MCF 10A (cell line): ENCODE measurements at regions of chr20 and their contacts with region 1.

Region 1: DNA sequence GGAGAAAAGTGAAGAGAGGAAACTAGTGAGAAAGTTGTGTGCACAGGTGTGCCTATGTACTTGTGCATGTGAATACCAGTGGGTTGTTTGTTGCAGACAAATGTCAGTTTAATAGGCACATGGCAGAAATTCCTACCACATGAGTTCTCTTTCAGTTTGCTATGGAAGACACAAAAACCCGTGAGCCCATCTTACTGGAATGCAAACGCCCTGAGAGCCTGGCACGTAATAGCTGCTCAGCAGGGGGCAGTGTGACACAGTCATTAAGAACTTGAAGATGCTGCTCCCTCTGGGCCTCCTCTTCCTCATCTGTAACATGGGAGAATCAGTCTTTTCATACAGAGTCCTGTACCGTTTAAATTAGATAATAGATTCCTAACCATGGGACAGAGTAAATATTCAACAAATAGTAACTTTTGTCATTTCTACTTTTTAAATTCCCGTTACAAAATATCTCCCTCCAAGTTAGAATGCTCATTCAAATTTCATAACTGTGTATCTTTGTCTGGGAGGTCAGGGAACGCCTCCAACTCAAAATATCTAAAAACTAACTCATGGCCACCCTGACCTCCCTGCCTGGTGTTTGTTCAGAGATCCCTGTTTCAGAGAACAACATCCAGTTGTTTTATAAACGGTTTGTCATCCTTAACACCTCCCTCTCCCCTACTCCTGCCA is 802.9 kb downstream of the MAFB start:
- DNase-seq: peak; percentile 80
- H3K4me3 Mint-ChIP-seq: no peak overlapping the region
- H3K27ac Mint-ChIP-seq: no peak overlapping the region
- H3K4me1 Mint-ChIP-seq: peaks cover 9% of the 10 kb centered on the region
- H3K27me3 Mint-ChIP-seq: no peaks in the 10 kb centered on the region
- CTCF ChIP-seq: peak; percentile 58

Region 2: DNA sequence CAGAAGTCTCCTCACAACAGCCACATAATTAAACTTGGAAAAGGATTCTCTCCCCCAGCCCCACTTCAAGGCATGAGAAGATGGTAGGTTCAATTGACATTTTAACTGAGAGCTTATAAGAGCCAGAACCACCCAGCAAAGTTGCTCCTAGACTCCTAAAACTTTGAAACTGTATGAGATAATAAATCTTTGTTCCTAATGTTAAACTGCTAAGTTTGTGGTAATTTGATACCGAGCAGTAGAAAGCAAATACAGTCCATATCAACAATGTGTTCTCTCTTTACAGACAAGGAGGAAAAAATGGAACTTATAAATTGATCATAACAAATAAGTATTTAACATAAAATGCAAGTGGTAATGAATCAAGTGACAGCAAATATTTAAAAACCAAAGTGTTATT is 28.9 kb before region 1 on chr20:
- CTCF ChIA-PET with region 1: no interaction called
- POLR2A ChIA-PET with region 1: no interaction called
- intact Hi-C with region 1: no loop called
- DNase-seq: no peak
- H3K4me3 Mint-ChIP-seq: no peak overlapping the region
- H3K27ac Mint-ChIP-seq: no peak overlapping the region
- H3K4me1 Mint-ChIP-seq: peaks cover 39% of the 10 kb centered on the region
- H3K27me3 Mint-ChIP-seq: no peaks in the 10 kb centered on the region
- CTCF ChIP-seq: no peak

Region 3: GRCh38 chr20:40090236-40090635 is 204.1 kb after region 1 on chr20:
- CTCF ChIA-PET with region 1: no interaction called
- POLR2A ChIA-PET with region 1: no interaction called
- intact Hi-C with region 1: loop called (anchors 2 kb)
- DNase-seq: peak; percentile 42
- H3K4me3 Mint-ChIP-seq: no peak overlapping the region
- H3K27ac Mint-ChIP-seq: no peak overlapping the region
- H3K4me1 Mint-ChIP-seq: no peaks in the 10 kb centered on the region
- H3K27me3 Mint-ChIP-seq: no peaks in the 10 kb centered on the region
- CTCF ChIP-seq: no peak

Region 4: DNA sequence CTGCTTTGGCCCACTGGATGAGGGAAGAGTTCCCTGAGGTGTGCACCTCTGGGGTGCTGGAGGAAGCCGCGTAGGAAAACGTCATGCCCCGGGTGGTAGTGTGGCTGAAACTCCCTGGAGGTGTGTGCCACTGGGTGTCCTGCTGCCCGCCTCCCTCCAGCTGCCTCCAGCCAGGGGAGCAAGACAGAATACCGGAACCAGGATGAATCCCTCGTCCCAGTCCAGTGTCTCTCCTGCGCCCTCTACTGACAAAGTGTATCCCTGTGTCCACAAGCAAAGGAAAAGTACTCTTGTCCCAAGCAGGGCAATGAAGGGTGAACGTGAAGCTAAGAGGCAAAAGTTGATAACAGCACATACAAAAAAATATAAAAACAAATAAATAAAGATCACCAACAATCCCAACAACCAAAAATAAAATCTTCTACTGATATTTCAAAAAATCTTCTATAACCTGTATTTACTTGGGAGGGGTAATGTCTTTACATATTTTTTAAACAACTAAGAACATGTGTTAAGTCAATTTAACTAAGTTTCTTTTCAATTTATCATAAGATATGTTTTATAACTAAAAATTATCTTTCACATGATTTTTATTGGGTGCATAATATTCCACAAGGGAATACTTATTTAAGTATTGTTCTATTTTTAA is 365.3 kb after region 1 on chr20:
- CTCF ChIA-PET with region 1: interaction called, 3 read pairs
- POLR2A ChIA-PET with region 1: no interaction called
- intact Hi-C with region 1: loop called (anchors 1 kb)
- DNase-seq: peak; percentile 76
- H3K4me3 Mint-ChIP-seq: no peak overlapping the region
- H3K27ac Mint-ChIP-seq: no peak overlapping the region
- H3K4me1 Mint-ChIP-seq: peaks cover 8% of the 10 kb centered on the region
- H3K27me3 Mint-ChIP-seq: no peaks in the 10 kb centered on the region
- CTCF ChIP-seq: peak; percentile 52

Region 5: GRCh38 chr20:40945754-40946450 is 1059.8 kb after region 1 on chr20:
- CTCF ChIA-PET with region 1: no interaction called
- POLR2A ChIA-PET with region 1: no interaction called
- intact Hi-C with region 1: loop called (anchors 5 kb)
- DNase-seq: peak; percentile 52
- H3K4me3 Mint-ChIP-seq: no peak overlapping the region
- H3K27ac Mint-ChIP-seq: no peak overlapping the region
- H3K4me1 Mint-ChIP-seq: peaks cover 6% of the 10 kb centered on the region
- H3K27me3 Mint-ChIP-seq: no peaks in the 10 kb centered on the region
- CTCF ChIP-seq: peak; percentile 16